Activated CD4-positive, alpha-beta memory T cell treated with anti-CD3 and anti-CD28 coated beads, Interleukin-2, amount 10 ng/mL, durations not matched to agents 7 days and 5 days (primary cell): ENCODE measurements at regions of chr9 and their contacts with region 1.

Region 1: GRCh38 chr9:124861342-124862229 is at the starts of genes ARPC5L and RPL35:
- DNase-seq: peak; percentile 97
- H3K4me3 Mint-ChIP-seq: peak within 1 kb of the TSS; percentile 86
- H3K27ac Mint-ChIP-seq: peak within 1 kb of the TSS; percentile 96
- H3K4me1 Mint-ChIP-seq: peaks cover 44% of the 10 kb centered on the region
- H3K27me3 Mint-ChIP-seq: no peaks in the 10 kb centered on the region
- total RNA-seq, gene ARPC5L: 76.6 to 79.4 TPM
- total RNA-seq, gene RPL35: 1,297 to 1,317 TPM

Region 2: GRCh38 chr9:124721109-124721906 is 140.3 kb before region 1 on chr9:
- CTCF ChIA-PET with region 1: no interaction called
- POLR2A ChIA-PET with region 1: no interaction called
- DNase-seq: no peak
- H3K4me3 Mint-ChIP-seq: no peak overlapping the region
- H3K27ac Mint-ChIP-seq: no peak overlapping the region
- H3K4me1 Mint-ChIP-seq: no peaks in the 10 kb centered on the region
- H3K27me3 Mint-ChIP-seq: peaks cover 14% of the 10 kb centered on the region

Region 3: GRCh38 chr9:124771021-124771866 is 90.3 kb before region 1 on chr9 and contains the start of gene NR6A1:
- CTCF ChIA-PET with region 1: interaction called, 264 read pairs
- POLR2A ChIA-PET with region 1: interaction called, 66 read pairs
- DNase-seq: peak; percentile 94
- H3K4me3 Mint-ChIP-seq: peak within 1 kb of the TSS; percentile 81
- H3K27ac Mint-ChIP-seq: peak within 1 kb of the TSS; percentile 73
- H3K4me1 Mint-ChIP-seq: peaks cover 45% of the 10 kb centered on the region
- H3K27me3 Mint-ChIP-seq: peaks cover 57% of the 10 kb centered on the region
- total RNA-seq, gene NR6A1: 0.28 to 0.76 TPM

Region 4: GRCh38 chr9:124810513-124811355 is 50.9 kb before region 1 on chr9:
- CTCF ChIA-PET with region 1: no interaction called
- POLR2A ChIA-PET with region 1: no interaction called
- DNase-seq: no peak
- H3K4me3 Mint-ChIP-seq: no peak overlapping the region
- H3K27ac Mint-ChIP-seq: no peak overlapping the region
- H3K4me1 Mint-ChIP-seq: no peaks in the 10 kb centered on the region
- H3K27me3 Mint-ChIP-seq: no peaks in the 10 kb centered on the region

Region 5: GRCh38 chr9:124880501-124880900 is 18.9 kb after region 1 on chr9:
- CTCF ChIA-PET with region 1: no interaction called
- POLR2A ChIA-PET with region 1: interaction called, 210 read pairs
- DNase-seq: no peak
- H3K4me3 Mint-ChIP-seq: no peak overlapping the region
- H3K27ac Mint-ChIP-seq: no peak overlapping the region
- H3K4me1 Mint-ChIP-seq: peaks cover 3% of the 10 kb centered on the region
- H3K27me3 Mint-ChIP-seq: no peaks in the 10 kb centered on the region

Region 6: DNA sequence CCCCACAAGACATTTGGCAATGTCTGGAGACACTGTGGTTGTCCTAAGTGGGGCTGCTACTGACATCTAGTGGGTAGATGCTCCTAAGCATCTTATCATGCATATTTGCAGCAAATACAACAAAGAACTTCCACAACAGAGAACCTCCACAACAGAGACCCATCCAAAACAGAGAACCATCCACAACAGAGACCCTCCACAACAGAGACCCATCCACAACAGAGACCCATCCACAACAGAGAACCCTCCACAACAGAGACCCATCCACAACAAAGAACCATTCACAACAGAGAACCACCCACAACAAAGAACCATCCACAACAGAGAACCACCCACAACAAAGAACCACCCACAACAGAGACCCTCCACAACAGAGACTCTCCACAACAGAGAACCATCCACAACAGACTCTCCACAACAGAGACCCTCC is 33.2 kb after region 1 on chr9:
- CTCF ChIA-PET with region 1: interaction called, 10 read pairs
- POLR2A ChIA-PET with region 1: interaction called, 4 read pairs
- DNase-seq: peak; percentile 44
- H3K4me3 Mint-ChIP-seq: no peak overlapping the region
- H3K27ac Mint-ChIP-seq: peak overlapping the region; percentile 63
- H3K4me1 Mint-ChIP-seq: peaks cover 1% of the 10 kb centered on the region
- H3K27me3 Mint-ChIP-seq: no peaks in the 10 kb centered on the region

Region 7: DNA sequence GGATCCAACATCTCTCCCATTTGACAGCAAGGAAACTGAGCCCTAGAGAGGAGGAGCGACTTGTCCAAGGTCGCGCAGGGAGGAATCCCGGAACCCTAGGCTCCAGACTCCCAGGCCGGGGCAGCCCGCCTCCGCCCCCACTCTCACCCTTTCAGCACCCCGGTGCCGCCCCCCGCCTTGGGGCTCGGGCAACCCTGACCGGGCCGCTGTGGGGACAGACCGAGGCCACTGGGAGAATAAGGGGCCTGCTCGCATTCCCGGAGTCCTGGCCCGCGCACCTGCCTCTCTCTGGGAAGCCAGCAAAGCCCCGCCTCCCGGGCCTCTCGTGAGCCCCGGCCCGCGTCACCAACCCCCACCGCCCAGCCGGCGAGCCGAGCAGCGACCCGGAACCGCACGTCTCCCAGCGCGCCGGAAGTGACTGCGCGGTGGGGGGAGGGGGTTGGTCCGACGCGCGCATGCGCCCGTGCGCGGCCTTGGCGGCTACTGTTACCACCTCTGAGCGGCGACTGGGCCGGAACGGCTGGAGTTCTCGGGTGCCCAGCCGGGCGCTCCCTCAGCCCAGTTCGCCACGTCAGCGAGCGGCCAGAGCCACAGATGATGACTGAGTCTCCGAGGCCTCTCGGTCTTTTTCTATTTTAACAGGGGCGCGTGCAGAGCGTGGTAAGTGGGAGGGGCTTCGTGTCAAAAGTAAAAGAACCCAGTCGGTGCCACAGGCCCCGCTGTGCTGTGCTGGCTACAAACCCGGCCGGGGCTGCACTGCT is 79.3 kb after region 1 on chr9 and contains the start of gene GOLGA1:
- CTCF ChIA-PET with region 1: no interaction called
- POLR2A ChIA-PET with region 1: interaction called, 21 read pairs
- DNase-seq: peak; percentile 94
- H3K4me3 Mint-ChIP-seq: peak within 1 kb of the TSS; percentile 97
- H3K27ac Mint-ChIP-seq: peak within 1 kb of the TSS; percentile 97
- H3K4me1 Mint-ChIP-seq: peaks cover 31% of the 10 kb centered on the region
- H3K27me3 Mint-ChIP-seq: no peaks in the 10 kb centered on the region
- total RNA-seq, gene GOLGA1: 18.0 to 19.7 TPM